A549 (cell line): ENCODE measurements at regions of chr9 and their contacts with region 1.

Region 1: GRCh38 chr9:29211580-29212396 is 1638.5 kb upstream of the C9orf72 start:
- DNase-seq: peak; percentile 47 to 56
- ATAC-seq: peak; percentile 70 to 85
- H3K4me3 ChIP-seq: peak overlapping the region; percentile 51
- H3K27ac ChIP-seq: peak overlapping the region; percentile 25 to 69; a peak in 4 of 6 replicates
- H3K4me1 ChIP-seq: peaks cover 22% of the 10 kb centered on the region
- CTCF ChIP-seq: peak; percentile 69
- EP300 ChIP-seq: no peak
- POLR2A ChIP-seq: no peak
- RAD21 ChIP-seq: peak; percentile 46 to 65

Region 2: GRCh38 chr9:28774416-28775235 is 437.2 kb before region 1 on chr9:
- CTCF ChIA-PET with region 1: interaction called, 16 read pairs
- POLR2A ChIA-PET with region 1: no interaction called
- DNase-seq: peak; percentile 7 to 52
- ATAC-seq: peak; percentile 52 to 59; a peak in 4 of 6 replicates
- H3K4me3 ChIP-seq: no peak overlapping the region
- H3K27ac ChIP-seq: no peak overlapping the region
- H3K4me1 ChIP-seq: 0 out of 3 replicates have a peak, but pooled peaks cover 5% of the 10 kb centered on the region
- CTCF ChIP-seq: peak; percentile 73
- EP300 ChIP-seq: no peak
- POLR2A ChIP-seq: no peak
- RAD21 ChIP-seq: peak; percentile 67 to 75

Region 3: GRCh38 chr9:29150606-29151005 is 61.2 kb before region 1 on chr9:
- CTCF ChIA-PET with region 1: no interaction called
- POLR2A ChIA-PET with region 1: no interaction called
- DNase-seq: no peak
- ATAC-seq: no peak
- H3K4me3 ChIP-seq: no peak overlapping the region
- H3K27ac ChIP-seq: no peak overlapping the region
- H3K4me1 ChIP-seq: no peaks in the 10 kb centered on the region
- CTCF ChIP-seq: no peak
- EP300 ChIP-seq: no peak
- POLR2A ChIP-seq: no peak
- RAD21 ChIP-seq: no peak

Region 4: DNA sequence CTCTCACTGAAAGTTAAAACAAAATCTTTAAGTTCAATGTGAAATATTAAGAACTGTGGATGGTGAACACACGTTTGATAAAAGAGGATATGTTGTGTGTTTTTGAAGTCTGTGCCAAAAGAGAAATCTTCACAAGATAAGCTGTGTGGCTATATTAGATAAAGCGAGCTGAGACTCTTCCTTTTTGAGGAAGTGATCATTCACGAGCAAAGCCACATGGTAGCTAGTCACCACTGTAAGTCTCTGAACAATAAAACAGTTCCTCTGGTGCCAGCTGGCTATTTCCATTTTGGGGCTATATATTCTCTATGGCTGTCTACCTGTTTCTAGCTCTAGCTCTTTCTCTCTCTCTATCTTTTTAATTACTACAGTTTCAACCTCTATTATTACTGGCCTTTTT is 210.7 kb after region 1 on chr9:
- CTCF ChIA-PET with region 1: no interaction called
- POLR2A ChIA-PET with region 1: no interaction called
- DNase-seq: no peak
- ATAC-seq: no peak
- H3K4me3 ChIP-seq: no peak overlapping the region
- H3K27ac ChIP-seq: no peak overlapping the region
- H3K4me1 ChIP-seq: no peaks in the 10 kb centered on the region
- CTCF ChIP-seq: no peak
- EP300 ChIP-seq: no peak
- POLR2A ChIP-seq: no peak
- RAD21 ChIP-seq: no peak